Posterior vena cava (tissue), 2 donors: ENCODE measurements at regions of chr2 and their contacts with region 1.

Region 1: GRCh38 chr2:224369028-224369632 is 32.8 kb downstream of the FAM124B start:
- DNase-seq: no peak

Region 2: GRCh38 chr2:223459328-223459939 is 909.7 kb before region 1 on chr2:
- intact Hi-C with region 1: no loop called
- DNase-seq: no peak

Region 3: GRCh38 chr2:223860809-223861738 is 508.1 kb before region 1 on chr2:
- intact Hi-C with region 1: no loop called
- DNase-seq: no peak

Region 4: DNA sequence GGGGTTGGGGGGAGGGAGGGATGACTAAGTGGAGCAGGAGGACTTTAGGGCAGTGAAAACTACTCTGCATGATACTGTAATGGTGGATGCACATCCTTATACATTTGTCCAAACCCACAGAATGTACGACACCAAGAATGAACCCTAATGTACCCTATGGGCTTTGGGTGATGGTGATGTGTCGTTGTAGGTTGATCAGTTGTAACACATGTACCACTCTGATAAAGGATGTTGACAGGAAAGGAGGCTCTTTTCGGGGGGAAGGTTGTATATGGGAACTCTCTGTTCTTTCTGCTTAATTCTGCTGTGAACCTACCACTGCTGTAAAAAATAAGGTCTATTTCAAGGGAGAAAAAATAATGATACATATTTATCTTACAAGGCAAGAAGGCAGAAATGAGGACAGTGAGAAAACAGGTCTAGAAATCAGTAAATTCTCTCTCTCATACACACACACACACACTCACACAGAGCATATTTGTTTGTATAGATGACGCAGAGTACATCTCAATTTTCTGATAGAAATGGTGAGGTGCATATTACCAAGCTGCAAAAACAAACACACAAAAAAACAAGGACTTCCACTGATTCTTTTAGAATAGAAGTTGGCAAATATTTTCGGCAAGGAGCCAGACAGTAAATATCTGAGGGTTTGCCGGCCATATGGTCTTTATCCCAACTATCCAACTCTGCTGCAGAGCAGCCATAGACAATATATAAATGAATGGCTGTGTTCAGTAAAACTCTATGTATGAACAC is 12.6 kb after region 1 on chr2:
- intact Hi-C with region 1: no loop called
- DNase-seq: no peak

Region 5: GRCh38 chr2:224393157-224393872 is 24.2 kb after region 1 on chr2:
- intact Hi-C with region 1: loop called in 1 of 2 experiments (anchors 1 kb)
- DNase-seq: no peak

Region 6: GRCh38 chr2:225328160-225328559 is 959.0 kb after region 1 on chr2:
- intact Hi-C with region 1: no loop called
- DNase-seq: no peak